Activated CD4-positive, alpha-beta memory T cell treated with anti-CD3 and anti-CD28 coated beads, Interleukin-2, amount 10 ng/mL, durations not matched to agents 7 days and 5 days (primary cell): ENCODE measurements at regions of chr3 and their contacts with region 1.

Region 1: DNA sequence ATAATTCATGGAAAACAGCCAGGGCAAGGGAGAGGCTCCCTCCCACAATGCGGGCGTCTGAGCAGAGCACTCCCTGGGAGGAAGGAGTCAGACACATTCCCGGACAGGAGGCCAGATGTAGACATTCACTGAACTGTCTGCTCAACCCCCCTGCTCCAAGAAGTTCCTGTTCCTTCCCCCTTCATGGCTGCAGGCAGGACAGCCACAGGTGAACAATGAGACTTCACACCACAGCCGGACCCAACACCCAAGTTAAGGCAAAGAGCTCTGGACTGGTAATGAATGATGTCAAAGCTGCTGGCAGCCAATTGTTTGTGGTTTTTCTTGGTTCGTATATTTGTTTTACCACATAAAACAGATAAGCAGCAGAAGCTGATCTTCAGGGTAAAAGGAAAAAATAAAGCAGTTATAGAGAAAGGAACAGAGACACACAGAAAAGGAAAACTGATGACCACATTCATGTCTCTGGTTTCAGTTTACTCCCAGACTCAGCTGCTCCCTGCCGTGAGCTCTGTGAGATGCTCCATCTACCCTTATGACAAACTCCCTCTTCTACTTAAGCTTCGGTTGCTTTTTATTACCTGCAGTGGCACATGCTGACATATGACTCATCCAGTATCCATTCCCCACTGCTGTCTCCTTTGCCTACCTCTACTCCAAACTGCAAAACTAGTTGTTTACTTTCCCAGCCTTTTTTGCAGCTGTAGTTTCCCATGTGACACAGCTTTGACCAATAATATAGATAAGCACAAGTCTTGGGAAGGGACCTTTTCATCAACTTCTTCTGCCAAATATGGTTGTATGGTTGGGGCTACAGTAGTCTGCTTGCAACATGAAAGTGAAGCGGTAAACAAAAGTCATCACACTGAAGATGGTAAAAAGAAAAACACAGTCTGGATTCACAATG is 33.1 kb downstream of the DZIP1L start:
- DNase-seq: peak; percentile 34
- H3K4me3 Mint-ChIP-seq: peak overlapping the region; percentile 56
- H3K27ac Mint-ChIP-seq: peak overlapping the region; percentile 59
- H3K4me1 Mint-ChIP-seq: peaks cover 32% of the 10 kb centered on the region
- H3K27me3 Mint-ChIP-seq: peaks cover 17% of the 10 kb centered on the region

Region 2: GRCh38 chr3:138118612-138119422 is 36.5 kb after region 1 on chr3:
- CTCF ChIA-PET with region 1: interaction called, 10 read pairs
- POLR2A ChIA-PET with region 1: no interaction called
- DNase-seq: peak; percentile 56
- H3K4me3 Mint-ChIP-seq: no peak overlapping the region
- H3K27ac Mint-ChIP-seq: no peak overlapping the region
- H3K4me1 Mint-ChIP-seq: peaks cover 8% of the 10 kb centered on the region
- H3K27me3 Mint-ChIP-seq: peaks cover 44% of the 10 kb centered on the region